IMR-90 (cell line): ENCODE measurements at regions of chr9 and their contacts with region 1.

Region 1: DNA sequence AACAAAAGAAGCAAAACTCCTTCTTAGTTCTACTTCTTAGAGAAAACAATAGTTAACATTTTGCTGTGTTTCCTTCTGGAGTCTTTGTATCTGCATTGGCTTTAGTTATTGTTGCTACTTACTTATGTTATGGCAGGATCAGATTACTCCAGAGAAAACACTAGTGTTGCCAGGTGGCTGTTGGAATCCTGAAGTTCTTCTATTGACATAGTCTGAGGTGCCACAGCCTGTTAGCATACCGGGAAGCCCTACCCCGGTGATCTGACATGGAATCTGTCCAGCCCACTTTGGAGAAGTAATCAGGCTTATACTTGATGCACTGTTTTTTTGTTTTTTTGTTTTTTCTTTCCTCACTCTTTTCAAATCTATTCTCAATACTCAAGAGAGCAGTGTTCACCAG is 68.5 kb upstream of the CEP78 start:
- DNase-seq: no peak
- ATAC-seq: no peak
- H3K4me3 ChIP-seq: no peak overlapping the region
- H3K27ac ChIP-seq: no peak overlapping the region
- H3K4me1 ChIP-seq: no peaks in the 10 kb centered on the region
- H3K27me3 ChIP-seq: no peaks in the 10 kb centered on the region; the same call in 1 of the 2 replicates
- CTCF ChIP-seq: no peak
- POLR2A ChIP-seq: no peak
- RAD21 ChIP-seq: no peak

Region 2: GRCh38 chr9:77131399-77131798 is 1036.0 kb before region 1 on chr9:
- CTCF ChIA-PET with region 1: no interaction called
- POLR2A ChIA-PET with region 1: no interaction called
- dilution Hi-C with region 1: no loop called
- in situ Hi-C with region 1: no loop called
- intact Hi-C with region 1: loop called (anchors 5 kb)
- DNase-seq: no peak
- ATAC-seq: no peak
- H3K4me3 ChIP-seq: no peak overlapping the region
- H3K27ac ChIP-seq: no peak overlapping the region
- H3K4me1 ChIP-seq: no peaks in the 10 kb centered on the region
- H3K27me3 ChIP-seq: no peaks in the 10 kb centered on the region; the same call in 1 of the 2 replicates
- CTCF ChIP-seq: no peak
- POLR2A ChIP-seq: no peak
- RAD21 ChIP-seq: no peak

Region 3: GRCh38 chr9:78130004-78130403 is 37.4 kb before region 1 on chr9:
- CTCF ChIA-PET with region 1: no interaction called
- POLR2A ChIA-PET with region 1: no interaction called
- dilution Hi-C with region 1: no loop called
- in situ Hi-C with region 1: no loop called
- intact Hi-C with region 1: no loop called
- DNase-seq: no peak
- ATAC-seq: no peak
- H3K4me3 ChIP-seq: no peak overlapping the region
- H3K27ac ChIP-seq: no peak overlapping the region
- H3K4me1 ChIP-seq: no peaks in the 10 kb centered on the region
- H3K27me3 ChIP-seq: peaks cover 9% of the 10 kb centered on the region
- CTCF ChIP-seq: no peak
- POLR2A ChIP-seq: no peak
- RAD21 ChIP-seq: no peak

Region 4: DNA sequence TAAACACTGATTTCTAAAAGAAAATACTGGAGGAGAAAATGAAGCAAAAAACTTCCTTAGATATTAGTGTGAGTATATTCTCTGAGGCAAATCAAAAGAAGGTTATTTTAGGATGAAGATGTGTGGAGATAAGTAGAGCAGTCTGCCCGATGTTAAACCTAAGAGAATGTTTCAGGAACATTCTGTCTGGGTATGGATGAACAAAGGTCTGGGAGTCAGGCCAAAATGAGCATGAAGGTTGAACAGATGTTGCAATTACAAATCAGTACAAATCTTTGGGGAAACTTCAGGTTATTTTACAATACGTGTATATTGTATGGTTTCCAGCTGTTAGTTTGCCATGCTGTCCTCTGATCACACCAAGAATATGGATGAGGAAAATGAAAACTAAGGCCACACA is 54.1 kb after region 1 on chr9:
- CTCF ChIA-PET with region 1: no interaction called
- POLR2A ChIA-PET with region 1: no interaction called
- dilution Hi-C with region 1: no loop called
- in situ Hi-C with region 1: no loop called
- intact Hi-C with region 1: loop called (anchors 10 kb)
- DNase-seq: no peak
- ATAC-seq: no peak
- H3K4me3 ChIP-seq: no peak overlapping the region
- H3K27ac ChIP-seq: no peak overlapping the region
- H3K4me1 ChIP-seq: no peaks in the 10 kb centered on the region
- H3K27me3 ChIP-seq: no peaks in the 10 kb centered on the region; the same call in 1 of the 2 replicates
- CTCF ChIP-seq: no peak
- POLR2A ChIP-seq: no peak
- RAD21 ChIP-seq: no peak